Activated B cell treated with CpG ODN at 0.5 μM for 24 hours (primary cell): ENCODE measurements at regions of chr3 and their contacts with region 1.

Region 1: DNA sequence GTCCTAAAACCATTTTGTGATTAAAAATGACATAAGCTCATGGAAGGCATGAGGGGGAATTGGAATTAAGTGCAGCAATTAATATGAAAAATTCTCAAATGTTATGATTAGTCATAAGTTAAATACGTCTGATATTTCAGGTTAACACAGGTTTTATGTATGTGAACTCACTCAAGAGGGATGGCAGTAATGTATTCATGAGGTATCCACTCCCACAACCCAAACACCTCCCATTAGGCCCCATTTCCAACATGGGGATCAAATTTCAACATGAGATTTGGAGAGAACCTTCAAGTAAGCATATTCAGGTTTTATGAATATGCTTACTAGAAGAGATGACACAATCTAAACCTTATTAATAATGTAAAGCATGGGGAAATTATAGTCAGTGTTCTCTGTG is 41.6 kb upstream of the IL20RB start:
- DNase-seq: no peak
- ATAC-seq: no peak
- H3K4me3 Mint-ChIP-seq: no peak overlapping the region
- H3K27ac Mint-ChIP-seq: no peak overlapping the region
- H3K4me1 Mint-ChIP-seq: peaks cover 67% of the 10 kb centered on the region
- H3K27me3 Mint-ChIP-seq: no peaks in the 10 kb centered on the region
- CTCF ChIP-seq: no peak

Region 2: DNA sequence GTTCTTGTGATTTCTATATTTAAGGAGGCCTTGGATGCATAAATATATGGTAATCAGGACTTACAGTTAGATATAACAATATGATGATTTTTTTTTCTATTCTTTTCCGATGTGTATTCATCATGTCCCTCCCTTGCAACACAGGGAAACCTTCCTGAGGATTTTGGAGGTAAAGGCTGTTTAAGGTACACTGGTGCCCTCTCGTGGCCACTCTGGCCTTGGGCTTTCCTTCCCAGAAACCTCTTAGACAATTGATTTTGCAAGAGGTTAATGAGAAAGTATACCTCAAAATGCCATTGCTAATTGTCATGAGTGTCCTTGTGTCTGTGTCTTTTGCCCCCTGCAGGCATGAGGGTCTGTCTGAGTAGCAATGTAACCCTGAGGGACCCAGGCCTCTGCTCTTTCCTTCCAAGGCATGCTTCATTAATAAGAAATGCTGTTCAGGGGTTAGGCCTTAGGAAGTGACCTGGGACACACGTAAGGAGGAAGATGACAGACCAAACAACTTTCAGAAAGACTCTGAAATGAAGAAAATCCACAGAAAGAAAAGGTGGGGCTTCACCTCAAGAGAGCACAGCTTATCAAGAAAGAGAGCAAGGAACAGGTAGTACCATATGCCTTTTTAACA is 1021.0 kb before region 1 on chr3:
- CTCF ChIA-PET with region 1: no interaction called
- POLR2A ChIA-PET with region 1: no interaction called
- intact Hi-C with region 1: no loop called
- DNase-seq: peak; percentile 20
- ATAC-seq: no peak
- H3K4me3 Mint-ChIP-seq: no peak overlapping the region
- H3K27ac Mint-ChIP-seq: no peak overlapping the region
- H3K4me1 Mint-ChIP-seq: no peaks in the 10 kb centered on the region
- H3K27me3 Mint-ChIP-seq: no peaks in the 10 kb centered on the region
- CTCF ChIP-seq: peak; percentile 58

Region 3: DNA sequence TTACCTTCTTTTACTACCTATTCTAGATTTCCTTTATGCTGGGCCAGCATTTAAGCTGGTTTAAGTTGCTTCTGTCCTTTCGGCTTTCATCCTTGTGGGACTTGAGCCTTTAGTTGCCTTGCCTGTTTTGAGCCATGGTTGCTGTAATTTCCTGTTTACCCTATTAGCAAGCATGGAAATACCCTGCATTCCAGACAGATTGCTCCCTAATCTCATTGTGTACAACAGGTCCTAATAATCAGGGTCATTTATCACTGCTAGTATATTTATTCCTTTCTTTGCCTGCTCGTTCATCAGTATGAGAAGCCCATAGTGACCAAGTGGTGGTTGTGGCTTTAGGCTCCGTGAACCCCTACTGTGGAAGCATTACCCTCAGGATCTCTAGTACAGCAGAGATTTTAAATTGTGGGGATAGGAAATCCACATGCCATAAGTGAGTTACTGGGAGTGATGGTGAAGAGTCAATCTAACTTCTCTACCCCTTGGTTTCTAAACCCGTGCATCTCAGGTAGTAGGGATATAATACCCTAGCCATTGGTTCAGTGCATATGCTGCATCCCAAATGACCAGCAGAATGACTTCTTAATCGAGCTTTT is 22.3 kb before region 1 on chr3:
- CTCF ChIA-PET with region 1: no interaction called
- POLR2A ChIA-PET with region 1: no interaction called
- intact Hi-C with region 1: loop called (anchors 2 kb)
- DNase-seq: no peak
- ATAC-seq: no peak
- H3K4me3 Mint-ChIP-seq: no peak overlapping the region
- H3K27ac Mint-ChIP-seq: no peak overlapping the region
- H3K4me1 Mint-ChIP-seq: peaks cover 53% of the 10 kb centered on the region
- H3K27me3 Mint-ChIP-seq: no peaks in the 10 kb centered on the region
- CTCF ChIP-seq: no peak